AG04450 (cell line): ENCODE measurements at regions of chr11 and their contacts with region 1.

Region 1: DNA sequence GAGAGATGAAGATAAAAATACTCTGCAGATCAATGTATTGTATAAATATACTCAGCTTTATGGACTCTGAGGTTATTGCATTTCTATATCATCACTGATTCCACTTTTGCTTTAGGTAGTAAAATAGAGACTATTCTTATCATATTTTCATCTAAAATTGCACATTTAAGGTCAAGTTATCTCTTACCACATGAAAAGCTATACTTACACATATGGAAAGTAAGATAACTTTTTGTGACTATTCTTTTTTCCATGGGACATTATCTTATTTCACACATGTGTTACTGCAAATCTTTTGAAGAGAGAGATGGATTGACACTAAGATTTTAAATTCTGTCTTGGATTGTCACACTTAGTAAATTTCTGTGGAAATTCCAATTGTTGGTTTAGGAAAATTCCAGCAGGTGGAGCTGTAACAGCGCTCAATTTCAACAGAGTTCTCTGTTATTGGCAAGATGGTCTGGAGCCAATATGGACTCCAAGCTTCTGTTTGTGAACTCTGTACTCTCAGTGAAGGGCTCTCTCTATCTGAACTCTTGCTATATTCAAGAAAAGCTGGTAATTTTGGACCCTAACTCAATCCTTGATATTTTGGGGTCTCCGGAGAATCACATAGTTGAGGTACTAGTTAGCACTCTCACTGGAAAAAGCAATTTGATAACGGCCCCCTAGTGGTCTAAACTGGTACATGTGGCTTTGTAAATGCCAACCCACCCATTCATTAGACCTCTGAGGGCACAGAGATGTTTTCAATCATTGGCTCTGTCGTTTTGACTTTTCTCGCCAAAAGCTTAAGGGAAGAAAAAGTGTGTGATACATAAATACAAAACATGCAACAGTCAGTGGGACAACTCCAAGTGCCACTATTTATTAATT is 429.7 kb downstream of the ETS1 start:
- DNase-seq: peak; percentile 41
- H3K4me3 ChIP-seq: peak overlapping the region; percentile 38; the same call in 1 of the 2 replicates
- H3K27ac ChIP-seq: no peak overlapping the region
- H3K27me3 ChIP-seq: peaks cover 12% of the 10 kb centered on the region
- CTCF ChIP-seq: peak; percentile 82

Region 2: DNA sequence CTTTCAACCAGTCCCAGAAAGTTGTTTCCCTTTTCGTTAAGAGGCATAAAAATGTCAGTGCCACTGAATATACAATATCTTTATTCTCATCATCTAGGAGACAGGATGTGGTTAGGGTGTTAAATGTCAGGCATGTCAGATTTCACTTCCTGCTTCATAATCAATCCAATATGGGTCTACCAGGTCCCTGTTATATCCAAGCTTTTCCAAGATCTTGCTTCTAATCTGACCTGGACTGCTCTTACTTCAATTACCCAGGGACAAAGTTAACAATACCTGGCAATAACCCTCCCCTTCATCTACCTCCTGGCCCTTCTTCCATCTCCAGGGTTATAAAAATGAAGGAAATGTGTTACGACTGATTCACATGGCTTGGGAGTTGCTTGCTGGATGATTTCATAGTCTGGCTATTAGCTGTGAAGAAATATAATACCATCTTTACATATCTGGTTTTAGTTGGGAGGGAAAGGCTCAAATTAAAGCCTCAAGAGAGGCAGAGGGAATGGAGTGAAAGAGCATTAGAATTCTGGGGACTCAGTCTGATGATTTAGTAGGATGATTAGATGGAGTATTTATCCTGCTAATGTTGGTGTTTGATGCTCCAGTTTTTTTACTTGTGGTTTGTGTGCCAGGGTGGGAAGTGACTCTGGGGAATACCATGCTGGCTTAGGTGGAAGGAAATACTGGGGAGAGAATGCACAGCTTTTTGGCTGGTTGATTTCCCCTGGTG is 104.6 kb before region 1 on chr11:
- CTCF ChIA-PET with region 1: interaction called, 69 read pairs
- POLR2A ChIA-PET with region 1: no interaction called
- DNase-seq: no peak
- H3K4me3 ChIP-seq: no peak overlapping the region
- H3K27ac ChIP-seq: no peak overlapping the region
- H3K27me3 ChIP-seq: no peaks in the 10 kb centered on the region
- CTCF ChIP-seq: no peak

Region 3: GRCh38 chr11:128146926-128147605 is 10.6 kb before region 1 on chr11:
- CTCF ChIA-PET with region 1: interaction called, 50 read pairs
- POLR2A ChIA-PET with region 1: no interaction called
- DNase-seq: no peak
- H3K4me3 ChIP-seq: no peak overlapping the region
- H3K27ac ChIP-seq: no peak overlapping the region
- H3K27me3 ChIP-seq: peaks cover 25% of the 10 kb centered on the region
- CTCF ChIP-seq: no peak

Region 4: DNA sequence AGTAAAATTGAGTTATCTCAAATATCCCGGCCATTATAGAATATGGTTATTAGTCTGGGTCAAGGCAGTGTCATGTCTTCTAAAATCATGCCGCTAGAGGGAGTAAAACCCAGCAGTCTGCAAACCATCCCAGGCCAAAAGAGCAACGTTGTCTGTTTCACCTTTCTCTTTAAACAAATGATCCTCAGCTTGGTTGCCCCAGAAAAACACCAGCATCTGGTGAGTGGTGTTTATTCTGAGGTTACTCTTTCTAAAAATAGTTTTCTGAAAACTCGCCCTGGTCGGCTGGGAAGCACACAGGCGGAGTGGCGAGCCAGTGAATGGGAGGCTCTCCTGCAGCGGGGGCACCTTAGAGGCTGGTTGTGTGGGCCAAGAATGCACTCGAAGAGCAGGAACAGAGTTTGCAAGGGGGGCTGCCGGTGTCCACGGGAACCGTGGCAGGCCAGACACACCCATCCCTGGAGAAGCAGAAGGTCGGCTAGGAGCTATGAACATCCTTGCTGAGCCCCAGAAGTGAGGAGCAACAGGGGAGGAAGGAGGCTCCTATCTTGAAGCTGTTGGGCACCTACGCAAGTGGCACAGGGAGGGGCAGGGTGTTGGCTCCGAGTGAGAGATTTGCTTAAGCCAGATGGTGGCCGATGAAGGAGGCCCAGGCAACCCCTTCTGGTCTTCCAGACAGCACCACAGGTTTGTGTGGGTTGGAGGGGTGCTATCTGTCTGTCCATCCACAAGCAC is 132.6 kb after region 1 on chr11:
- CTCF ChIA-PET with region 1: interaction called, 12 read pairs
- POLR2A ChIA-PET with region 1: no interaction called
- DNase-seq: peak; percentile 88
- H3K4me3 ChIP-seq: no peak overlapping the region
- H3K27ac ChIP-seq: no peak overlapping the region
- H3K27me3 ChIP-seq: no peaks in the 10 kb centered on the region
- CTCF ChIP-seq: peak; percentile 87

Region 5: GRCh38 chr11:128776424-128777284 is 619.0 kb after region 1 on chr11:
- CTCF ChIA-PET with region 1: interaction called, 13 read pairs
- POLR2A ChIA-PET with region 1: no interaction called
- DNase-seq: no peak
- H3K4me3 ChIP-seq: no peak overlapping the region
- H3K27ac ChIP-seq: peak overlapping the region; percentile 21
- H3K27me3 ChIP-seq: no peaks in the 10 kb centered on the region
- CTCF ChIP-seq: peak; percentile 67

Region 6: GRCh38 chr11:128860571-128861361 is 703.1 kb after region 1 on chr11:
- CTCF ChIA-PET with region 1: interaction called, 10 read pairs
- POLR2A ChIA-PET with region 1: no interaction called
- DNase-seq: no peak
- H3K4me3 ChIP-seq: no peak overlapping the region
- H3K27ac ChIP-seq: no peak overlapping the region
- H3K27me3 ChIP-seq: peaks cover 8% of the 10 kb centered on the region
- CTCF ChIP-seq: no peak